Common myeloid progenitor, CD34-positive (primary cell): ENCODE measurements at regions of chr3 and their contacts with region 1.

Region 1: DNA sequence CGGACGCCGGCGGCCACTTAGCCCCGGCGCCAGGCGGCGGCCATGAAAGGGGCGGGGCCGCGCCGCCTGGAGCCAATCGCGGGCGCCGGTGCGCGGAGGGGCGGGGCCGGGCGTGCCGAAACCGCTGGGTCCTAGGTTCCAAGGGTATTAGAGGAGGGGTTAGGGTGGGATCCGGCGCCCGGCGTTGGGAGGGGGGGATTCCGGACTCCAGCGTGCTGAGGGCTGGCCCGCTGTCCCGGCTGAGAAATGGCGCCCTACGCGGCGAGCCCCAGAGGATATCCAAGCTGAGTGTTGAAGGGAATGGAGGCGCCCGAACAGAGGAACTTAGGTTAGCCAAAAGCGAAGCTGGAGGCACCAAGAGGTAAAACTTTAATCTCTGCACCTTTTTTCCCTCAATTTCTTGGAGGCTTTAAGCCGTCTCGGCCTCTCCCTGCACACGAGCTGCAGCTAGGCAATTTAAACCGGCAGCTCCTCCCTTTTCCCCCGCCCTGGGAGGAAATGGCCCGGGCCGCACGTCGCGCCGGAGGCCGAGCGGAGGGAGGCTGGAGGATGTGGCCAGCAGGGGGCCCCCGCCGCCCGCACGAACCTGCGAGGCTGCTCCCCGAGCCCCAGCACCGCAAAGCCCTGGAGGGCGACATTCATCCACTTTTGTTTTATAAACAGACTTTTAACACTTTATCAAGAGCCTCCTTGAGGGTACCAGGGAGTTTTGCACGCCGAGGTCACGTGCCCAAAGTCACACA is at the start of gene XXYLT1:
- DNase-seq: peak; percentile 91 to 95 (median 94)
- H3K4me3 ChIP-seq: peak within 1 kb of the TSS; percentile 76 to 93 (median 81)
- H3K27ac ChIP-seq: peak within 1 kb of the TSS; percentile 47 to 78
- H3K4me1 ChIP-seq: peaks cover 7 to 27% (median 23%) of the 10 kb centered on the region in 4 experiments
- H3K27me3 ChIP-seq: no peaks in the 10 kb centered on the region

Region 2: GRCh38 chr3:194671900-194672808 is 599.1 kb before region 1 on chr3 and contains the start of gene LSG1:
- CTCF ChIA-PET with region 1: interaction called, 27 read pairs
- POLR2A ChIA-PET with region 1: no interaction called
- DNase-seq: peak; percentile 97 to 99 (median 98)
- H3K4me3 ChIP-seq: peak within 1 kb of the TSS; percentile 79 to 100 (median 97)
- H3K27ac ChIP-seq: peak within 1 kb of the TSS; percentile 100
- H3K4me1 ChIP-seq: peaks cover 11 to 22% (median 17%) of the 10 kb centered on the region in 4 experiments
- H3K27me3 ChIP-seq: peaks cover 0 to 2% (median 0%) of the 10 kb centered on the region in 5 experiments

Region 3: DNA sequence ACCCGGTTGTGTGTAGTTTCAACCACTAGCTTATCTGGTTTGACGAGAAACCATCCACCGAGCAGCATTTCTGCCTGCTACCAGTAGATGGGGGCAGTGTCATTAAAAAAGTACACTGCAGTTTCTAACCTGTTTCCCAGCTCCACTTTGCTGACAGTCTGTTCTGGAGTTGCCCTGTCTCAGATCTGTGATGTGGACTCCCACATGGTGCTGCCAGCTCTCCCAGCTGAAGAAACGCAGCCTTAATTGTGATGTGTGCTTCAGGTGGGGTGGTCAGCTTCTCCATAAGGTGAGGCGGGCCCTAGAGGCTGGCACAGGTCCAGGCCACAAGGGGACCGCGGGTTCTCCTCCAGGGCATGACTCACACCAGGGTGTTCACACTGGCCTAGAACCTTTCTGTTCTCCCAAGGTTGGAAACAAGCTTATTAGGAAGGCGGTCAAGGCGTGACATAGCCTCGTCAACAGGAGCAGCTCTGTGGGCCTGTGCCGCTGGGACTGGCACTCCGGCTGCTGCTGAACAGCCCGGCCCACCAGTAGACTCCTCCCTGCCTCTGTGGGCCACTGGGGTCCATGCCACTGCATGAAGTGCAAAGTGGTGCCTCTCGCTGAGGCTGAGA is 588.5 kb before region 1 on chr3:
- CTCF ChIA-PET with region 1: interaction called, 20 read pairs
- POLR2A ChIA-PET with region 1: interaction called, 3 read pairs
- DNase-seq: peak; percentile 86 to 93 (median 91)
- H3K4me3 ChIP-seq: peak overlapping the region in 2 of 7 experiments; percentile 3 to 32
- H3K27ac ChIP-seq: no peak overlapping the region
- H3K4me1 ChIP-seq: peaks cover 0 to 51% (median 37%) of the 10 kb centered on the region in 4 experiments
- H3K27me3 ChIP-seq: no peaks in the 10 kb centered on the region

Region 4: DNA sequence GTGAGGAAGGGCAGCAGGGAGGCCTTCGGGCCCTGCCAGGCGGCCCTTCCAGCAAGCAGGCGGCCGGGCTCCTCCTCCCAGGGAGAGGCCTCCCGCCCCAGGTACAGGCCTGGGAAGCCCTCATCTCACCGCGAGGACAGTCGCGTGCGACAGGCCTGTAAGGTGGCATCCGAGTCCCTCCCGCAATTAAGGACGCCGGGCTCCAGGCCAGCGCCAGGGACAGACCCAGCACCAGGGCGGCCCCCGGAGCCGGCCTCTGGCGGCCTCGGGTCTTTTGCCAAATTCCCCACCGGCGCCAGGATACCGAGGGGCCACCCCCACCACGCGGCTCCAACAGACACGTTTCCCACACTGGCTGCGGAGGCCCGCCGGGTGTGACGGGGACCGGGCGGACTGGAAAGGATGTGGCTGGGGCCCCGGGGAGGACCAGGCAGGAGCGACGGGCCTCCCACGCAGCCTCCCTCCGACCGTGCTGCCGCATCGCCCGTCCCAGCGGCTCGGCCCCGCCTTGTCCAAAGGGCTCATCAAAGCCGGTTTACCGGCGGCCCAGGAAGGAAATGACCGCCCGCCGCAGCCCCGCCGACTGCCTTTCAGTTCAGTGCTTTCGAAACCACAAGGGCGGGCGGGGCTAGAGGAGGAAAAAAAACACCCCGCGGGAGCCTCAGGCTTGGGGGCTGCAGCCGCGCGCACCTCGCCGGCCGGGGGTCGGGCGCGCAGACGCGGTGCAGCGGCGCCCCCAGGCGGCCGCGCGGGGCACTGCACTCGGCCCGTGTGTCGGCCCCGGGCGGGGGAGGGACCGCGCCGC is 11.6 kb before region 1 on chr3:
- CTCF ChIA-PET with region 1: interaction called, 43 read pairs
- POLR2A ChIA-PET with region 1: interaction called, 7 read pairs
- DNase-seq: peak; percentile 96 to 99 (median 98)
- H3K4me3 ChIP-seq: peak overlapping the region in 4 of 7 experiments; percentile 69 to 88 (median 80)
- H3K27ac ChIP-seq: peak overlapping the region; percentile 53 to 84
- H3K4me1 ChIP-seq: peaks cover 4 to 65% (median 36%) of the 10 kb centered on the region in 4 experiments
- H3K27me3 ChIP-seq: no peaks in the 10 kb centered on the region

Region 5: DNA sequence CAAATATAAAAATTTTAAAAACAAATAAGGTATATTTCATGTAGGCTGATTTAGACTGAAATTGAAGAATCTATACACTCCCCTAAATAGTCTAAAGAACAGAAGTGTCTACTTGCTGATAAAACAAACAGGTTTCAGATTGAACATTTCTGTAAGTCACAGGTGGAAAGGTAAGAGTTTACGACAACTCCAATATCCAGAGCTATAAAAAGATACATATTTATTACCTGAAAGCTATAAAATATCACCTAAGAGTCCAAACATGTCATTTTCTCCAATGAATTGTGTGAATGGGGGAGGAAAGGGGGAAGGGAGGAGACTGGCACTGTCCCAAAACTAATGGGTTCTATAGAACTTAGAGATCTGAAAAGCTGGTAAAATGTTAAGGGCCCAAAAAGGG is 245.7 kb after region 1 on chr3:
- CTCF ChIA-PET with region 1: interaction called, 87 read pairs
- POLR2A ChIA-PET with region 1: no interaction called
- DNase-seq: no peak
- H3K4me3 ChIP-seq: no peak overlapping the region
- H3K27ac ChIP-seq: no peak overlapping the region
- H3K4me1 ChIP-seq: peaks cover 0 to under 1% (median 0%) of the 10 kb centered on the region in 4 experiments
- H3K27me3 ChIP-seq: no peaks in the 10 kb centered on the region

Region 6: DNA sequence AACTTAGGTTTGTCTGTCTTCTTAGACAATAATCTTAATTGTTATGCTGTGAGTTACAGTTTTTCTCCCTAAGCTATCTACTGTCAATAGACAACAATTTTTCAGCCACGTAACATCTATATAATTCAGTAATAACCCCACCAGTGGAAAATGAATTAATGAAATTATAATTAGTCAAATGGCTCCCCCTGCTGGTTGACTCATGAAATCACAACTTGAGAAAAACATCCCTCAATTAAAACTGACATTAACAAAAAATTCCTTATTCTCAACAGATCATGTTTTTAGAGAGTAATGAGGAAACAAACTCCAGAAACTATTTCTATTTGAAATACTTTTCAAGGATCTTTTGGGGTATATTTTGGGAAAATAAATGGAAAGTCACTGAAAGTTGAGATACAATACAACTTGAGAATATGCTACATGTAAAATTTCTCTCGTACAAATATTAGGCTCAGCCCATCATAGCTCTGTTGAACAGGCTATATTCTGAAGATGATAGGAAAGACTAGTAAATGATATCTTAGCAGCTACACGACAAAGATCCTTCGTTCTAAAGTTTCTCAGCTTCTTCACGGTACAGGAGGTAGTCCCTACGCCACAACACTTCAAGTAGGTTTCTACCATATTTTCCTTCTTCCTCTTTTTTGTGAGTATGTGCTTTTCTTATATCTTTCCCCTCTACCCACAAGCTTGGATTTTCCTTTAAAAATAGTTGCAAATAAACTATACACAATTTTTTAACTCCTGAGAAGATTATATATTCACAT is 251.2 kb after region 1 on chr3:
- CTCF ChIA-PET with region 1: interaction called, 87 read pairs
- POLR2A ChIA-PET with region 1: no interaction called
- DNase-seq: peak; percentile 45 to 75 (median 60)
- H3K4me3 ChIP-seq: no peak overlapping the region
- H3K27ac ChIP-seq: no peak overlapping the region
- H3K4me1 ChIP-seq: peaks cover 0 to 8% (median 3%) of the 10 kb centered on the region in 4 experiments
- H3K27me3 ChIP-seq: no peaks in the 10 kb centered on the region

Region 7: DNA sequence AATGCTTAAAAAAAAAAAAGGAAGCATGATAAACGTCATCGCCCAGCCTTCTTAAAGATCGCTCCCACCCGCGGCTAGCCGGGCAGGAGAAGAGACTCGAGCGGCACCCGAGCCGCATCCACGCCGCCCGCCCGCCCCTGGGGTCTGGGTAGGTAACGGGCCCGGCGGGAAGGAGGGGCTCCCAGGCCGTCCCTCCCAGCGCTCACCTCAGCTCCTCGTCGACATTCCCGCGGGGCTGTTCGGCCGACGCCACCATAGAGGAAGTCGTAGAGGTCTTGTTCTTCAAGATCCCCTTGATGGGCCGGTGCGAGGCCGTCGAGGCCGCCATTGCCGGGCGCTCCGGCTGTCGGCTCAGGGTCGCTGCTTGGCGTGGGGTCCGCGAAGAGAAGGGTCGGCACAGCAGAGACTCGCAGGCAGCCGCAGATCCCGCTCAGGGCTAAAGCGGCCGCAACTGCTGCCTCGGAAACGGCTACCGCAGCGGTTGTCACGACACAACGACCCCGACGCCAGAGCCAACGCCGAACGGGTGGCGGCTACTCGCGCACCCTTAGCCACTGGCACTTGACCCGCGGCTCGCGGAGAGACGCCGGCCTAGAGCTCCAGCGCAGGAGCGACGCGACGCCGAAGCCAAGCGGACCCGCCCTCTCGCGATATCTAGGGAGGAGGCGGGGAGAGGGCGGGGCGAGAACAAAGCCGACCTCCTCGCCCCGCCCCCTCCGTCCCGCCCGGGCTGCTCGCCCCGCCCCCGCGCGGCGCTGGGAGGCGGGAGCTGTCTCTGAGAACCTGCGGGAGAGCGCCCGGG is 271.6 kb after region 1 on chr3 and contains the start of gene PPP1R2:
- CTCF ChIA-PET with region 1: interaction called, 11 read pairs
- POLR2A ChIA-PET with region 1: no interaction called
- DNase-seq: peak; percentile 84 to 88 (median 87)
- H3K4me3 ChIP-seq: peak within 1 kb of the TSS; percentile 67 to 98 (median 84)
- H3K27ac ChIP-seq: peak within 1 kb of the TSS; percentile 56 to 93
- H3K4me1 ChIP-seq: peaks cover 22 to 63% (median 47%) of the 10 kb centered on the region in 4 experiments
- H3K27me3 ChIP-seq: peaks cover 0 to 5% (median 3%) of the 10 kb centered on the region in 5 experiments

Region 8: DNA sequence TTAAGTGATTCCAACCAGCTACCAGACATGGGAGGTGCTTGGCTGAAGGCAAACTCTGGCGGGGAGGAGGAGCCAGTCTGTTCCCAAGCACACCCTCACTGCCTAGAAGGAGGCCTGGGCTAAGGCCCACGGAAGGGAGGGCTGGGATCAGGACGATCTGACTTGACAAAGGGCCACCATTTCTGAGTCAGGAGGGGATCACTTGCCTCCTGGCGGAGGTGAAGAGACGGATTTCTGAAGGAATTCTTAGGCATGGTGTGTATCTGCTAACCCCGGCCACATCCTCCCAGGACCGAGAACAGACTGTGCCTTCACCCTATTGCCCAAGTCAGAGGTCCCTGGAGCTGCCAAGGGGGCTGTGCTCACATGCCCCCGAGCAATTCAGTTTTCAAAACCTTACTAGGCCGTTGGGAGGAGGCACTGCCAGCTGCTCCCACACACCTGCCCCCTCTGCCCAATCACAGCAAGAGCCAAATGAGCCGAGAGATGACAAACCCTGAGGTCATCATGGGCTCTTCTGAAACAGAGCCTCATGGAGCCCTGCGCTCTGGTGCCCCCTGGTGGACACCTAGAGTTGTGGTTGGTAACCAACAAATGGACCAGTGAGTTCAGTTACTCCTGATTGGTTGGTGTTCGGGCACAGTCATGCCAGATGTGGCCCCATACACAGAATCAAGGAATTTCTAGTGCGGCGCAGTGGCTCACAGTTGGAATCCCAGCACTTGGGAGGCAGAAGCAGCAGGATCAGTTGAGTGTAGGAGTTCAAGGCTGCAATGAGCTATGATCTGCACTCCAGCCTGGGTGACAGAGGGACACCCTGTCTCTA is 643.6 kb after region 1 on chr3:
- CTCF ChIA-PET with region 1: no interaction called
- POLR2A ChIA-PET with region 1: no interaction called
- DNase-seq: peak; percentile 92 to 97 (median 96)
- H3K4me3 ChIP-seq: no peak overlapping the region
- H3K27ac ChIP-seq: no peak overlapping the region
- H3K4me1 ChIP-seq: peaks cover 0 to 35% (median 25%) of the 10 kb centered on the region in 4 experiments
- H3K27me3 ChIP-seq: peaks cover 0 to 2% (median 0%) of the 10 kb centered on the region in 5 experiments